ENCODE measurements at regions of chr22 and their contacts with region 1.

Region 1: GRCh38 chr22:46714550-46714949 is 23.5 kb downstream of the CERK start:
- DNase-seq: no peak
- ATAC-seq: peak; percentile 45

Region 2: DNA sequence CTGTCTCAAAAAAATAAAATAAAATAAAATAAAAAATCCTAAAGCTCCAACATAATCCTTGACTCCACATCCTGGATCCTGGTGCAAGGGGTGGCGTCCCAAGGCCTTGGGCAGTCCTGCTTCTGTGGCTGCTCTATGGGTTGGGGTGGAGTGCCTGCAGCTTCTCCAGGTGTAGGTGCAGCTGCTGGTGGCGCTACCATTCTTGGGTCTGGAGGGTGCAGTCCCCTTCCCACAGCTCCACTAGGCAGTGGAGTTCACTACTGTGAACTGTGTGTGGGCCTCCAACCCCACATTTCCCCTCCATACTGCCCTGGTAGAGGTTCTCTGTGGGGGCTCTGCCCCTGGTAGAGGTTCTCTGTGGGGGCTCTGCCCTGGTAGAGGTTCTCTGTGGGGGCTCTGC is 41.0 kb after region 1 on chr22:
- intact Hi-C with region 1: loop called (anchors 1 kb)
- DNase-seq: no peak
- ATAC-seq: no peak

Measured in sciatic nerve (tissue), 2 donors.